ENCODE measurements at regions of chr16 and their contacts with region 1.

Region 1: DNA sequence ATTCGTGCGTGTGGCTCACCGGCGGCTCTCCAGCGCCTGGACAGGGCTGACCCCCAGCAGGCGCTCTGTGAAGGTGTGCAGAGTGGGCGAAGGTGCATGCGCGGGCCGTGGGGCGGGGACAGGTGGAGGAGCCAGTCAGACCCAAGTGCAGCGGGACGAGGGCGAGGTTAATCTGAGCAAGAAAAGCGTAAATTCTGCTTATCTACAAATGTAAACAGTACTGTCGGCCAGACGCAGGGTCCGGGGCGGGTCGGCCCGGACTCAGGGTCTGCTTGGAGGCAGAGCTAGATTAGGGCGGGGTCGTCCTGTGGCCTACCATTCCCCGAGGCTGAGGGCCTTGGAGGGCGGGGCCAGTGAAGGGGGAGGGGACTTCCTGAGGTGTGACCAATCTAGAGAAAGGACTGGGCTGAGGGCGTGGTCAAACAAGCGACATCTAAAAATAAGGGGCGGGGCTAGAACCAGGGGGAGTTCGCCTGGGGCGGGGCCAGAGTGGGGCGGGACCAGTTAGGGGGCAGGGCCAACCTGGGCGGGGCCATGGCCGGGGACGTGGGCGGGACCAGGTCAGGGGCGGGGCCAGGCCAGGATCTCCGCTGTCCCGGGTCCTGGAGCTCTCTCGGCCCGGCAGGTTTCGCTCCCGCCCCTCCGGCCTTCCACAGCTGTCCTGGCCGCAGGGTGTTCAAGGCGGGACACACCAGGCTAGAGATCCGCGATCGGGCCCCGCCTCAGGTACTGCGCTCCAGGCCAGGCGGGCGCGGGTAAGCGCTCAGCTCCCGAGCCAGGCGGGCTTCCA is at the start of gene SEC14L5:
- DNase-seq: peak; percentile 98 to 100
- H3K4me3 ChIP-seq: peak within 1 kb of the TSS; percentile 45
- H3K4me3 Mint-ChIP-seq: peak within 1 kb of the TSS; percentile 71
- H3K27ac Mint-ChIP-seq: peak within 1 kb of the TSS; percentile 2
- H3K4me1 ChIP-seq: peaks cover 10% of the 10 kb centered on the region
- H3K4me1 Mint-ChIP-seq: peaks cover 7% of the 10 kb centered on the region
- H3K27me3 ChIP-seq: no peaks in the 10 kb centered on the region
- H3K27me3 Mint-ChIP-seq: peaks cover 4% of the 10 kb centered on the region
- CTCF ChIP-seq: no peak
- total RNA-seq, gene SEC14L5: 0.14 and 0.67 TPM in 2 replicates

Region 2: GRCh38 chr16:4693296-4693955 is 264.5 kb before region 1 on chr16 and contains the start of gene NUDT16L1:
- CTCF ChIA-PET with region 1: no interaction called
- POLR2A ChIA-PET with region 1: no interaction called
- intact Hi-C with region 1: loop called (anchors 2 kb)
- DNase-seq: peak; percentile 92 to 97
- H3K4me3 ChIP-seq: peak within 1 kb of the TSS; percentile 100
- H3K4me3 Mint-ChIP-seq: peak within 1 kb of the TSS; percentile 76
- H3K27ac Mint-ChIP-seq: peak within 1 kb of the TSS; percentile 63
- H3K4me1 ChIP-seq: 0 out of 2 replicates have a peak, but pooled peaks cover 6% of the 10 kb centered on the region
- H3K4me1 Mint-ChIP-seq: no peaks in the 10 kb centered on the region
- H3K27me3 ChIP-seq: no peaks in the 10 kb centered on the region
- H3K27me3 Mint-ChIP-seq: no peaks in the 10 kb centered on the region
- CTCF ChIP-seq: no peak
- total RNA-seq, gene NUDT16L1: 27.9 and 31.3 TPM in 2 replicates

Region 3: DNA sequence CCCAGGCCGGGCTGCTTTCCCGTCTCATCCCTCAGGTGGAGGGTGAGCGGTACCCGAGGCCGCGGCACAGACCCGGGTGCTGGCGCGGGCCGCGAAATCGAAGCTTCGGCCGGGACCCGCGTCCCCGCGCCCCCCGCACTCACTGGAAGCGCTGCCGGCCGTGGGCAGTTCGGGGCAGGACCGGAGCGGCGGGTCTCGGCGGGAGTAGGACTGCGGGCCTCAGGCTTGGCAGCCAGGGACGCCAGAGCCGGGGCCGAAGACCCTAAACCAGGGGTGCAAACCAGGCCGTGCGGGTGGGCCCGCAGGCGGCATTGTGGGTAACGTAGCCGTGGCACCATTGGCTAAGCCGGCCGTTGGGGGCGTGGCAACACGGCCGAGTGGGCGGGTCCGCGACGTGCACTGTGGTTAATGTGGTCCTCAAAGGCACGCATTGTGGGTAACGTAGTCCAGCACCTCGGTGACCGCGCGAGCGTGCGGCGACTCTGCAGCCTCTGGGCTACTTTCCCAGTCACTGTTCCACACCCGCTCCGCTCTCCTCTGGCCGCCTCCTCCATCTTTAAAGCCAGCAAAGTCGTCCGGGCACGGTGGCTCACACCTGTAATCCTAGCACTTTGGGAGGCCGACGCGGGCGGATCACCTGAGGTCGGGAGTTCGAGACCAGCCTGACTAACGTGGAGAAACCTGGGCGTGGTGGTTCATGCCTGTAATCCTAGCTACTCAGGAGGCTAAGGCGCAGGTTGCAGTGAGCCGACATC is 190.9 kb before region 1 on chr16 and contains the start of gene ZNF500:
- CTCF ChIA-PET with region 1: no interaction called
- POLR2A ChIA-PET with region 1: no interaction called
- intact Hi-C with region 1: loop called (anchors 1 kb)
- DNase-seq: peak; percentile 97 to 98
- H3K4me3 ChIP-seq: peak within 1 kb of the TSS; percentile 77
- H3K4me3 Mint-ChIP-seq: peak within 1 kb of the TSS; percentile 77
- H3K27ac Mint-ChIP-seq: peak within 1 kb of the TSS; percentile 71
- H3K4me1 ChIP-seq: peaks cover 10% of the 10 kb centered on the region; the same call in 1 of the 2 replicates
- H3K4me1 Mint-ChIP-seq: peaks cover 10% of the 10 kb centered on the region
- H3K27me3 ChIP-seq: no peaks in the 10 kb centered on the region
- H3K27me3 Mint-ChIP-seq: no peaks in the 10 kb centered on the region
- CTCF ChIP-seq: no peak
- total RNA-seq, gene ZNF500: 12.9 and 13.3 TPM in 2 replicates

Region 4: GRCh38 chr16:4846891-4847773 is 110.8 kb before region 1 on chr16 and contains the starts of genes GLYR1 and UBN1:
- CTCF ChIA-PET with region 1: interaction called, 3 read pairs
- POLR2A ChIA-PET with region 1: no interaction called
- intact Hi-C with region 1: loop called (anchors 1 kb)
- DNase-seq: peak; percentile 97 to 99
- H3K4me3 ChIP-seq: peak within 1 kb of the TSS; percentile 97
- H3K4me3 Mint-ChIP-seq: peak within 1 kb of the TSS; percentile 82
- H3K27ac Mint-ChIP-seq: peak within 1 kb of the TSS; percentile 36
- H3K4me1 ChIP-seq: peaks cover 13% of the 10 kb centered on the region
- H3K4me1 Mint-ChIP-seq: peaks cover 8% of the 10 kb centered on the region
- H3K27me3 ChIP-seq: no peaks in the 10 kb centered on the region
- H3K27me3 Mint-ChIP-seq: no peaks in the 10 kb centered on the region
- CTCF ChIP-seq: no peak
- total RNA-seq, gene GLYR1: 112 and 117 TPM in 2 replicates
- total RNA-seq, gene UBN1: 31.5 and 37.9 TPM in 2 replicates

Region 5: GRCh38 chr16:4918750-4919280 is 39.1 kb before region 1 on chr16:
- CTCF ChIA-PET with region 1: interaction called, 3 read pairs
- POLR2A ChIA-PET with region 1: no interaction called
- intact Hi-C with region 1: loop called (anchors 2 kb)
- DNase-seq: peak; percentile 89 to 91
- H3K4me3 ChIP-seq: no peak overlapping the region
- H3K4me3 Mint-ChIP-seq: peak overlapping the region; percentile 45
- H3K27ac Mint-ChIP-seq: peak overlapping the region; percentile 95
- H3K4me1 ChIP-seq: peaks cover 43% of the 10 kb centered on the region
- H3K4me1 Mint-ChIP-seq: peaks cover 12% of the 10 kb centered on the region
- H3K27me3 ChIP-seq: no peaks in the 10 kb centered on the region
- H3K27me3 Mint-ChIP-seq: no peaks in the 10 kb centered on the region
- CTCF ChIP-seq: no peak

Region 6: DNA sequence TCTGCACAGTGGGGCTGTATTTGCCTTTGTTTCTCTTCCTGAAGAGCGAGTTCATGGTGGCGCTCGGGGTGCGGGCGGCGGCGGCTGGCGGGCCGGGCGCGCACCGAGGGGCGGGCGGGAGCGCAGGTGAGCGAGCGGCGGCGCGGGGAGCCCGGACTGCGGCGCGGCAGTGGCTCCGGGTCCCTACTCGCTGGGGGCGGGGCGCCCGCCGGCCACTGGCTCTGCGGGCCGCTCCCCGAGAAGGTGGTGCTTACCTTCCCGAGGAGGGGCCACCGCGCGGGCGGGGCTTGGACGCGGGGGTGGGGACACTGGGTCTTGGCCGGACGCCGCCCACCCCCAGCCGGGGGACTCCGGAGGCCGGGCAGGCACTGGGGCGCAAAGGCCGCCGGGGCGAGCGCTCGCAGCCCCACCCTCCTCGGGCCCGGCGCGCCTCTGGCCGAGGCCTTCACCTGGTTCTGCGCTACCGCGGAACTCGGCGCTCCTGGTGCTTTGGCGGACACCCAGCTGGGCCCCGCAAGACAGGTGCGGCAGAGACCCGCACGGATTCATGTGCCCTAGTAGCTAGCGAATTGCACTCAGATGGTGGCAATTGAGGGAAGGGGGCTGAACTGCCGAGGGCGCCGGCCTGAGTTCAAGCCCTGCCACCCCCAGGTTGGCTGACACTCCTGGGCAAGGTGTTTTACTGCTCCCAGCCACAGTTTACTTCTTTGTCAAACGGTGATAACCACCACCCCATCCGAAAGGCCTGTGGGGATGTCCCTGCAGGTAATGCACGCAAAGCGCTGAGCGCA is 20.7 kb before region 1 on chr16 and contains the start of gene PPL:
- CTCF ChIA-PET with region 1: interaction called, 4 read pairs
- POLR2A ChIA-PET with region 1: no interaction called
- intact Hi-C with region 1: loop called (anchors 1 kb)
- DNase-seq: peak; percentile 96 to 98
- H3K4me3 ChIP-seq: peak within 1 kb of the TSS; percentile 77
- H3K4me3 Mint-ChIP-seq: peak within 1 kb of the TSS; percentile 88
- H3K27ac Mint-ChIP-seq: peak within 1 kb of the TSS; percentile 63
- H3K4me1 ChIP-seq: peaks cover 17% of the 10 kb centered on the region
- H3K4me1 Mint-ChIP-seq: no peaks in the 10 kb centered on the region
- H3K27me3 ChIP-seq: no peaks in the 10 kb centered on the region
- H3K27me3 Mint-ChIP-seq: no peaks in the 10 kb centered on the region
- CTCF ChIP-seq: no peak
- total RNA-seq, gene PPL: 61.5 and 68.1 TPM in 2 replicates

Region 7: GRCh38 chr16:5024632-5025031 is 66.7 kb after region 1 on chr16:
- CTCF ChIA-PET with region 1: no interaction called
- POLR2A ChIA-PET with region 1: no interaction called
- intact Hi-C with region 1: loop called (anchors 5 kb)
- DNase-seq: peak in 1 of 2 experiments; percentile 16
- H3K4me3 ChIP-seq: no peak overlapping the region
- H3K4me3 Mint-ChIP-seq: no peak overlapping the region
- H3K27ac Mint-ChIP-seq: no peak overlapping the region
- H3K4me1 ChIP-seq: no peaks in the 10 kb centered on the region
- H3K4me1 Mint-ChIP-seq: no peaks in the 10 kb centered on the region
- H3K27me3 ChIP-seq: no peaks in the 10 kb centered on the region
- H3K27me3 Mint-ChIP-seq: no peaks in the 10 kb centered on the region
- CTCF ChIP-seq: no peak

Region 8: DNA sequence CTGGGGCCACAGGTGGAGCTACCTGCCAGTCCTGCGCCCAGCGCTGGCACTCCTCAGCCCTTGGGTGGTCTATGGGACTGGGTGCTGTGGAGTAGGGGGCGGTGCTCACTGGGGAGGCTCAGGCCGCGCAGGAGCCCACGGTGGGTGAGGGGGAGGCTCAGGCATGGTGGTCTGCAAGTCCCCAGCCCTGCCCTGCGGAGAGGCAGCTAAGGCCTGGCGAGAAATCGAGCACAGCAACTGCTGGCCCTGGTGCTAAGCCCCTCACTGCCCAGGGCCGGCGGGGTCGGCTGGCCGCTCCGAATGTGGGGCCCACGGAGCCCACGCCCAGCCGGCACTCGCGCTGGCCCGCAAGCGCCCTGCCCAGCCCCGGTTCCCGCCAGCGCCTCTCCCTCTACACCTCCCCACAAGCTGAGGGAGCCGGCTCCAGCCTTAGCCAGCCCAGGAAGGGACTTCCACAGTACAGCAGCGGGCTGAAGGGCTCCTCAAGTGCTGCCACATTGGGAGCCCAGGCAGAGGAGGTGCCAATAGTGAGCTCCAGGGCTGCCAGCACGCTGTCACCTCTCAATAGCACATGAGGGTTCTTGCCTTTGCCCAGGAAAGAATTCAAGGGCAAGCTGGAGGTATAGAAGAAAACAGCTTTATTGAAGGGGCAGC is 150.7 kb after region 1 on chr16:
- CTCF ChIA-PET with region 1: no interaction called
- POLR2A ChIA-PET with region 1: no interaction called
- intact Hi-C with region 1: no loop called
- DNase-seq: no peak
- H3K4me3 ChIP-seq: no peak overlapping the region
- H3K4me3 Mint-ChIP-seq: no peak overlapping the region
- H3K27ac Mint-ChIP-seq: no peak overlapping the region
- H3K4me1 ChIP-seq: no peaks in the 10 kb centered on the region
- H3K4me1 Mint-ChIP-seq: no peaks in the 10 kb centered on the region
- H3K27me3 ChIP-seq: no peaks in the 10 kb centered on the region
- H3K27me3 Mint-ChIP-seq: peaks cover 4% of the 10 kb centered on the region
- CTCF ChIP-seq: no peak

Measured in Caco-2 (cell line).